Activated CD4-positive, alpha-beta memory T cell treated with anti-CD3 and anti-CD28 coated beads for 36 hours (primary cell): ENCODE measurements at regions of chr12 and their contacts with region 1.

Region 1: DNA sequence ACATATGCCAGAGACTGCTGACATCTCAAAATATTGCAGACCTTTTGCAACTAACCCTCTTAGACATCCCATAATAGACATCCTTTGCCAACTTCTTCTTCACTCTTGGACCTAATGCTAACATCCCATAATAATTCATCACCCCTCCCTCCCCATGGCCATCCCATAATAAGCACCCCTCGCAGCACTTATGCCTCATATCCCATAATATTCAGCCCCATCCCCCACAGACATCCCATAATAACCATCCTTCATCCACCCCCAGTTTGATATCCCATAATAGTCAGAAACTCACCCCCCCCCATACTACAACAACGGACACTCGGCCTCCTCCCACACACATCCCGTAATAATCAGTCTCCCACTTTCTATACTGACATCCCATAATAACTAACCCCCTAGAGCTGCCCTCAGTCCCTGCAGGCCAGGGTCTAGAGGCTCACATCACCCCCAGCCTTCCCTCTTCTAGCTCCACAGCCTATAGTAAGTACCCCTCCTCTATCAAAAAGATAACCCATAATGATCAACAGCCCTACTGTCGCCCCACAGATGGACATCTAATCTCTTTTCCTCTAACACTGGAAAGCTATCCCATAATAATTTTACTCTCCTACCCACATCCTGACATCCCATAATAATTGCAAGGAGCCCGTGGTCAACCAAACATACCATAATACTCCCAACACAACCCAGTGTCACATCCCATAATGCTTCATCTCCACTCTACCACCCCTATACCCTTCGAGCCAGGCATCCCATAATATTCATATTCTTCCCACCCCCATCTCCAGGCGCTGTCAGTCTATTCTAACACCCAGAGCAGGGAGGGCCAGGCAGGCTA is 792 bp upstream of the CHD4 start:
- DNase-seq: peak; percentile 82
- H3K4me3 Mint-ChIP-seq: no peak overlapping the region
- H3K27ac Mint-ChIP-seq: no peak overlapping the region
- H3K4me1 Mint-ChIP-seq: peaks cover 53% of the 10 kb centered on the region
- H3K27me3 Mint-ChIP-seq: no peaks in the 10 kb centered on the region

Region 2: GRCh38 chr12:6443361-6443983 is 164.5 kb before region 1 on chr12:
- CTCF ChIA-PET with region 1: no interaction called
- POLR2A ChIA-PET with region 1: no interaction called
- intact Hi-C with region 1: loop called (anchors 5 kb)
- DNase-seq: peak; percentile 75
- H3K4me3 Mint-ChIP-seq: peak overlapping the region; percentile 91
- H3K27ac Mint-ChIP-seq: peak overlapping the region; percentile 98
- H3K4me1 Mint-ChIP-seq: peaks cover 69% of the 10 kb centered on the region
- H3K27me3 Mint-ChIP-seq: no peaks in the 10 kb centered on the region

Region 3: DNA sequence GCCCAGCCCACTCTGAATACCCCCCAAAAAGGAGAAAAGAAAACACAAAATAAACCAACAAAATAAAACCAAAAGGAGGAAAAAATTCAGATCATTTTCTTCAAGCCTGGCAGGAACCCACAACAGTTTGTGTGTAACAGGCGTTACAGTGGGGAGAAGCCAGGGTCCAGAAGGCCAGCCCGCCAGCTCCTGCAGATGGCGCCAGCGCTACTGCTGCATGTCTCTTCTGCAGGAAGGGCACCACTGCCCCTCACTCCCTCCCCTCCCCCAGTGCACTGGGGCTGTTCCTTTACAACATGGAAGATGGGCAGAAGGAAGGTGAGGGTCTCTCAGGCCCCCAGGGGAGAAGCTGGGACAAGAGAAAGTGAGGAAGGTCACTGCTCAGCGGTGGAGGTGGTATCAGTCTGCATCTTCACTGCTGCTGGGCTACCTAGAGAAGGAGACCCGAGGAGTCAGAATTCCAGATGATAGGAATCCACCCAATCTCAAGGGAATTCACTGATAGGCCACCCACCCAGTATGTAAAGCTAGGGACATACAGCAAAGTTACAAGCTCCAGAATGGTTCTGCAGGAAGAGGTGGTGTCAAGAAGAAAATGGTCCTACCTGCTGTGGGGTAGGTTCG is 37.6 kb before region 1 on chr12:
- CTCF ChIA-PET with region 1: interaction called, 13 read pairs
- POLR2A ChIA-PET with region 1: interaction called, 4 read pairs
- intact Hi-C with region 1: loop called (anchors 2 kb)
- DNase-seq: peak; percentile 67
- H3K4me3 Mint-ChIP-seq: no peak overlapping the region
- H3K27ac Mint-ChIP-seq: peak overlapping the region; percentile 63
- H3K4me1 Mint-ChIP-seq: peaks cover 63% of the 10 kb centered on the region
- H3K27me3 Mint-ChIP-seq: no peaks in the 10 kb centered on the region

Region 4: DNA sequence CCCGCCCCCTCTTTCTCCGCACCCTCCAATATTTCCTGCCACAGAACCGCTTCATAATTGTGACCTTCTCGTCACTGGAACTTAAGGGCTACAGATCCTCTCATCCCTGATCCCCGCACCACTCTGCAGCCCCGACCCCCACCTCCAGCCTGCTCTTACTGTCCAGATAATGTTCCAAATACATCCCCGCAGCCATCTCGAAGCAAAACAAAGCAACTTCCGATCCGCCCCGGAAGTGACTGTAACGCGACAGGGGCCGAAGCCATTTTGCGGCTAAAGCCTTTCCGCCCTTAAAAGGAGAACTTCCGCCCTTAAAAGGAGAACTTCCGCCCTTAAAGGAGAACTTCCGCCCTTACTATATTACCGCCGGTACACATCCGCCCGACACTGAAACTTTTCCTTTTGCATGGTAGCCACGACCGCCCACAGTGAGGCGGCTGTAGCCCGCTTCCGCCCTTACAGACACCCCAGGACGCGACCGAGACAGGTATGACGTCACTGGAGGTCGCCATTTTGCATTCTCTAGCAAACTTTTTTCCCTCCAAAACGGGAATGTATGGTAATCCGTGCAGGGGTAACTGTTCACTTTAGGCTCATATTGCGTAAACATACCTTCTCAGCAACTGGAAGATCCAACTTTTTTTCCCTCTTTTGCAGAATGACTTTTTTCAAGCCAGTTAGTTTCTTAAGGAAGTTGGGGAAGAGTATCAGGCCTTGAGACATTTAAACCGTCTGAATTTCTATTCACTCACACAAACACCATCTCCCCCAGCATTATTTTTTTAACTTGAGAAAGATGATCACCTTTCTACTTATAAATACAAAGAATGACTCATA is 55.2 kb after region 1 on chr12 and contains the start of gene ING4:
- CTCF ChIA-PET with region 1: no interaction called
- POLR2A ChIA-PET with region 1: no interaction called
- intact Hi-C with region 1: loop called (anchors 1 kb)
- DNase-seq: peak; percentile 98
- H3K4me3 Mint-ChIP-seq: peak within 1 kb of the TSS; percentile 91
- H3K27ac Mint-ChIP-seq: peak within 1 kb of the TSS; percentile 83
- H3K4me1 Mint-ChIP-seq: peaks cover 22% of the 10 kb centered on the region
- H3K27me3 Mint-ChIP-seq: no peaks in the 10 kb centered on the region
- total RNA-seq, gene ING4: 13.8 to 15.2 TPM